Activated CD4-positive, alpha-beta T cell treated with anti-CD3 and anti-CD28 coated beads for 36 hours (primary cell): ENCODE measurements at regions of chr7 and their contacts with region 1.

Region 1: GRCh38 chr7:148831782-148832181 is 52.3 kb downstream of the EZH2 start:
- DNase-seq: no peak
- ATAC-seq: no peak
- H3K4me3 Mint-ChIP-seq: no peak overlapping the region
- H3K27ac Mint-ChIP-seq: no peak overlapping the region
- H3K4me1 Mint-ChIP-seq: no peaks in the 10 kb centered on the region
- H3K27me3 Mint-ChIP-seq: no peaks in the 10 kb centered on the region

Region 2: DNA sequence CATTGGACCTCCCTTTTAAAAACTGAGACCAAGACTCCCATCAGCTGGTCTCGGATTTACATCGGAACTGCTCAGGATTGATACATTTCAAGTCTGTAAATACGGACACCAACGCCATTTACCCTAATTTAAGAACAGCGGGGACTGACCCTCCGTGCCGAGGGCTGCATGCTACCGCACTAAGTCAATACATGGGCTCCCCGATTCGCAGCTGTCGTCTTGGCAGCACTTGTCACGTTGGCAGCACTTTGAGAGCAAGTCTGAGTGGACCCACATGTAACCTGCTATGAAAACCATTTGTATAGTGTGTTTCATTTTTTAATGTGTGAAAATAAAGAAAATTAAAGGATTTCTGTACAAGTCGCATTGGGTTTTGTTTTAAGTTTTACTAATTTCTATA is 31.1 kb before region 1 on chr7:
- CTCF ChIA-PET with region 1: no interaction called
- POLR2A ChIA-PET with region 1: no interaction called
- intact Hi-C with region 1: loop called in 1 of 2 experiments (anchors 1 kb)
- DNase-seq: no peak
- ATAC-seq: no peak
- H3K4me3 Mint-ChIP-seq: no peak overlapping the region
- H3K27ac Mint-ChIP-seq: no peak overlapping the region
- H3K4me1 Mint-ChIP-seq: no peaks in the 10 kb centered on the region
- H3K27me3 Mint-ChIP-seq: no peaks in the 10 kb centered on the region